GM23248 (cell line): ENCODE measurements at regions of chrX and their contacts with region 1.

Region 1: GRCh38 chrX:41781502-41781901 is 57.5 kb downstream of the GPR82 start:
- DNase-seq: peak; percentile 58
- H3K4me3 ChIP-seq: no peak overlapping the region
- H3K27ac ChIP-seq: no peak overlapping the region
- H3K4me1 ChIP-seq: peaks cover 17% of the 10 kb centered on the region
- H3K27me3 ChIP-seq: no peaks in the 10 kb centered on the region

Region 2: DNA sequence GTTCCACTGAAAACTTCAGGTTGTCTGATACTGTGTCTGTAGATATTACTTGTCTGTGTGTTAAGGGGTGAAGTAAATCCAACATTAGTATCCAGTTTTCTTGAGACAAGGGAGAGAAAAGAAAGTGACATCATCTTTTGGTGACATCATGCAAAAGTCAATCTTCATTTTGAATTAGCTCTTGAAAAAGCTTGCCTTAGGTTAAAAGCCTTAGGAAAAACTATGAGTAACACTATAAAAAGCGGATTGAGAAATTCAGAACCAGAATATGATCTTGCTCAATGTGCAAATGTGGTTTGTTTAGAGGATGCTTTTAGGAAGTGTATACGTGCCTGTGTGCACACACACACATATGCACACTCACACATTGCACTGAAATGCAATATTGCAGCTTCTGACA is 487.7 kb after region 1 on chrX:
- in situ Hi-C with region 1: loop called (anchors 25 kb)
- DNase-seq: peak; percentile 34
- H3K4me3 ChIP-seq: no peak overlapping the region
- H3K27ac ChIP-seq: no peak overlapping the region
- H3K4me1 ChIP-seq: no peaks in the 10 kb centered on the region
- H3K27me3 ChIP-seq: no peaks in the 10 kb centered on the region

Region 3: GRCh38 chrX:42530027-42530426 is 748.5 kb after region 1 on chrX:
- in situ Hi-C with region 1: loop called (anchors 25 kb)
- DNase-seq: peak; percentile 83
- H3K4me3 ChIP-seq: no peak overlapping the region
- H3K27ac ChIP-seq: no peak overlapping the region
- H3K4me1 ChIP-seq: no peaks in the 10 kb centered on the region
- H3K27me3 ChIP-seq: no peaks in the 10 kb centered on the region